MCF 10A (cell line): ENCODE measurements at regions of chr7 and their contacts with region 1.

Region 1: GRCh38 chr7:47266131-47266706 is 315.7 kb downstream of the TNS3 start:
- DNase-seq: peak; percentile 75
- H3K4me3 Mint-ChIP-seq: no peak overlapping the region
- H3K27ac Mint-ChIP-seq: no peak overlapping the region
- H3K4me1 Mint-ChIP-seq: peaks cover 11% of the 10 kb centered on the region
- H3K27me3 Mint-ChIP-seq: no peaks in the 10 kb centered on the region
- CTCF ChIP-seq: peak; percentile 88

Region 2: GRCh38 chr7:47207956-47208355 is 58.3 kb before region 1 on chr7:
- CTCF ChIA-PET with region 1: no interaction called
- POLR2A ChIA-PET with region 1: no interaction called
- intact Hi-C with region 1: no loop called
- DNase-seq: no peak
- H3K4me3 Mint-ChIP-seq: no peak overlapping the region
- H3K27ac Mint-ChIP-seq: no peak overlapping the region
- H3K4me1 Mint-ChIP-seq: no peaks in the 10 kb centered on the region
- H3K27me3 Mint-ChIP-seq: peaks cover 48% of the 10 kb centered on the region
- CTCF ChIP-seq: no peak

Region 3: DNA sequence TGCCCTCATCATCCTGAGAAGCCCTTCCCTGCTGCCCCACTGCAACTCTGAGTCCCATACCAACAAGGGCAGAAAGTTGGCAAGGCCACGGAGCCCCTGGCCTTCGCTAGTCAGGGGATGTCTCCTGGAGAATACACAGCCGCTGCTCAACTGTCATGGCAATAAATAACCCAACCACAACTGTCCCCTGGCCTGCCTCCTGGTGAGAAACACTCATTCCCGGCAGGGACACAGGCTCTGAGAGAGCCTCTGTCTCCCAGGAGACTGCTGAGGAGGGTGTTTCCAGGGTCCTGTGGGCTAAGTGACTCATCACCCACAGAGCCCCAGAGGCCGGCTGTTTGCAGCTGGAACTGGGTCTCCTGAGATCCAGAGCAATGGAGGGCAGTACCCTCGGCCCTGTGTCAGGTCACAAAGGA is 38.4 kb before region 1 on chr7:
- CTCF ChIA-PET with region 1: no interaction called
- POLR2A ChIA-PET with region 1: no interaction called
- intact Hi-C with region 1: no loop called
- DNase-seq: peak; percentile 54
- H3K4me3 Mint-ChIP-seq: no peak overlapping the region
- H3K27ac Mint-ChIP-seq: no peak overlapping the region
- H3K4me1 Mint-ChIP-seq: peaks cover 15% of the 10 kb centered on the region
- H3K27me3 Mint-ChIP-seq: no peaks in the 10 kb centered on the region
- CTCF ChIP-seq: no peak

Region 4: DNA sequence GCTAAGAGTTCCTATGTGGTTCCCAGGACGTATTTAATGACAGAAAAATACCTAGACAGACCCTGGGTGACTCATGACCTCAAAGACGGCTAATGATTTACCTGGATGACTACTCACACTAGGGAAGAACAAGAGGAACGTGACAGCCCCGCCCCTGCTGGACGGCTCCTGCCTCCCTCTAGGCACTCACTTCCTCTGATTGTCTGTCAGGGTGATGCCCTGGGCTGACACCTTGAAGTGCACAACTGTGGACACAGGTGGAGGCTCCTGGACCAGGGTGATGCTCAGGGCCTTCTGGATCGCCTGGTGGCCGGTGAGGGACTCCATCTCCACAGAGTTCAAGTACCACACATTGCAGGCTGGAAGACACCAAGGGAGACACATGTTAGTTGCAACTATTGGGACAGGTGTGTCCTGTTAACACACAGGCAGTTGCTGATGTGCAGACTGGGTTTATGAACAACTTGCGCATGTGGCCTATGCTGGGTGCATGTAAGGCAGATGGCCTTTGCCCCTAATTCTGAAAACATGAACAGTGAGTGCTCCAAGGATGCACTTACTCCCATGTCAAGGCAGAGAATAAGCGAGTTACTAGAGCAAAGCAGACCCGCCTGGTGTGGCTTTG is 17.4 kb after region 1 on chr7:
- CTCF ChIA-PET with region 1: interaction called, 28 read pairs
- POLR2A ChIA-PET with region 1: no interaction called
- intact Hi-C with region 1: no loop called
- DNase-seq: peak; percentile 58
- H3K4me3 Mint-ChIP-seq: no peak overlapping the region
- H3K27ac Mint-ChIP-seq: no peak overlapping the region
- H3K4me1 Mint-ChIP-seq: no peaks in the 10 kb centered on the region
- H3K27me3 Mint-ChIP-seq: no peaks in the 10 kb centered on the region
- CTCF ChIP-seq: no peak

Region 5: DNA sequence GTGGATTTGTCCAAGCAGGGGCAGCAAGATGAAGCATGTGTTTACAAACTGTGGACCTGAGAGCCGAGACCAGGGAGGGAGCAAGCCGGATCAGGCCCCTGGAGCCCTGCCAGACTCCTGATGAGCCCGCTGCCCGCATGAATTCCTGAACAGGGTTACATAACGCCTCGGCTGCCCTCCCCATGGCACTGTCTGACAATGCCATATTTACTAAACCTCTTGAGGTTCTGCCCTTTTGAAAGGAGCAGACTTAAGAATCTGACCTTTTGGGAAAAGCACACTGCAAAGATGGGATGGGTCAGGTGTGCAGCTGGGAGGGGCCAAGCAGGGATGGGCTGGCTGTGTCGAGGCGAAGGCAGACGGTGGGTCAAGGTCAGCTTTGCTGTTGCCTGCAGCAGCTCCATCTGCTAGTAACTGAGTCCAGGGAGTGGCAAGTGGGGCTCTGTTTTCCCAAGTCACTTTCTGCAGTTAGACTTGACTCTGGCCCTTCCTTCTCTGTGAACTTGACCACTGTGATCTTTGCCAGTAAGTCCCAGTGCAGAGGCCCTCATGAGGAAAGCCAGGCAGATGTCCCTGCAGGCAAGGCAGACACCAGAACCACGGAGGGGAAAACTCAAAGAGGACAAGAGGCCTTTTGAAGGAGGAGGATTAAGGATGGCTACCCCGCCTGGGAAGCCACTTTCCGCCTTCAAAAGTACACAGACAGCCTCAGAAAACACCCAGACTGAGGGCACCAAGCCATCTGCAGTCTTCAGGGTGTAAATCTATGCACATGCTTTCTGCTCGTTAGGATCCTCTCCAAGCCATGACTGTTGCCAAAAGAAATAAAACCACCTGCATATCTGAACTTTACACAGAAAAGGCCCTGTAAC is 139.9 kb after region 1 on chr7:
- CTCF ChIA-PET with region 1: interaction called, 6 read pairs
- POLR2A ChIA-PET with region 1: no interaction called
- intact Hi-C with region 1: loop called (anchors 1 kb)
- DNase-seq: peak; percentile 93
- H3K4me3 Mint-ChIP-seq: peak overlapping the region; percentile 54
- H3K27ac Mint-ChIP-seq: peak overlapping the region; percentile 67
- H3K4me1 Mint-ChIP-seq: peaks cover 41% of the 10 kb centered on the region
- H3K27me3 Mint-ChIP-seq: no peaks in the 10 kb centered on the region
- CTCF ChIP-seq: no peak

Region 6: DNA sequence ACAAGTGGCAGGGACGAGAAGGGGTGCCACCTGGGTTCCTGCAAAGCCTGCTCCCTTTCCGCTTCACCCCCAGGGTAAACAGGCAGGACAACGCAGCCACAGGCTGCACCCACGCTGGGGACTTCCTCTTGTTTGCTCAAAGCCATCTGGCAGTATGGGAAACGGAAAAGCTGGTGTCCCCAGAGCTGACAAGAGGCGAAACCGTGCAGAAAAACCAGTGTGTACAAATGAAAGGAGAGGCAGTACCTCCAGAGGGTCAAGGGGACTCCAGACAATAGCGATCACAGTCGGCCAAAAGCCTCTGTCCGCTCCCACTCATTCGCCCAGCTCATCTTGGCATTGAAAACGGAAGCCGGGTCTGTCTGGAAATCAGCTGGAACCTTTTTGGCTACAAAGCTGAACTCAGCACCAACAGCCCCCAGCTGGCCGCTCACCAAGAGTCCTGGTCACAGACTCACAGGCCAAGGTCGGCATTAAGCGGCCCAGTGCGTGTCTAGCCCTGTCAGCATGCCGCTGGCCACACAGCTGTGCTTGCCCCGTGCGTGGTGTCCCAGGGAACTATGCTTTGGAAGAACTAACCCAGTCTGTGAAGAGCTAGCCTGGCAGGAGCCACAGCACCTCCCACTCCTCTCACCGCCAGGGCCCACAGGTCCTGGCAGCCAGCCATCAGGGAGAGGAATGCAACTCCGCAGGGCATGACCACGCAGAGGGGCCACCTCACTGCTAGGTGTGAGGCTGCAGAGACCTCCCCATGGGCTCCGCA is 305.3 kb after region 1 on chr7:
- CTCF ChIA-PET with region 1: interaction called, 11 read pairs
- POLR2A ChIA-PET with region 1: no interaction called
- intact Hi-C with region 1: no loop called
- DNase-seq: peak; percentile 81
- H3K4me3 Mint-ChIP-seq: peak overlapping the region; percentile 55
- H3K27ac Mint-ChIP-seq: peak overlapping the region; percentile 85
- H3K4me1 Mint-ChIP-seq: peaks cover 52% of the 10 kb centered on the region
- H3K27me3 Mint-ChIP-seq: no peaks in the 10 kb centered on the region
- CTCF ChIP-seq: no peak

Region 7: DNA sequence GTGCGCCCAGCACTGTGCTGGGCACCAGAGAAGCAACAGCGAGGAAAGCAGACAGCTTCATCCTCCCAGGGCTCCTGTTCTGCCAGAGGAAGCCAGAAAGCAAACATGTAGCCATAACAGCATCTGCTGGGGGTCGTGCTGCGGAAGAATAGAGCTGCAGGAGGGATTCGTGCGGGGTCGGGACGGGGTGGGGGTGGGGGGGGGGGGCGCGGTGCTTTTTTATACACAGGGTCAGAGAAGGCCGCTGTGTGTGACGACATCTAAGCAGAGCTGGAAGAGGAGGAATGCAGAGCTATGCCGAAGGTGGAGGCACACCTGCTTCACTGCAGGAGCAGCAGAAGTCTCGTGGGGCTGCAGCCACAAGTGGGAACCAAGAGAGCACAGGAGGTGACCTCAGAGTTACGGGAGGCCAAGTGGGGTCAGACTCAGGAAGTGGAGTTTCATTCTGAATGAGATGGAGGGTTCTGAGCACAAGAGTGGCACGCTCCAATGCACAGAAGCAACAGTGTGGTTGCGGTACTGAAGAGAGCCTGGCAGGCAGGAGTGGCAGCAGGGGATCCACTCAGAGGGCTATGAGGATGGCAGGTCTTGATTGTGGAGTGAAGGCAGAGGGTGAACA is 671.0 kb after region 1 on chr7:
- CTCF ChIA-PET with region 1: interaction called, 5 read pairs
- POLR2A ChIA-PET with region 1: no interaction called
- intact Hi-C with region 1: loop called (anchors 2 kb)
- DNase-seq: no peak
- H3K4me3 Mint-ChIP-seq: no peak overlapping the region
- H3K27ac Mint-ChIP-seq: no peak overlapping the region
- H3K4me1 Mint-ChIP-seq: peaks cover 10% of the 10 kb centered on the region
- H3K27me3 Mint-ChIP-seq: no peaks in the 10 kb centered on the region
- CTCF ChIP-seq: no peak

Region 8: GRCh38 chr7:48011323-48011722 is 745.1 kb after region 1 on chr7:
- CTCF ChIA-PET with region 1: no interaction called
- POLR2A ChIA-PET with region 1: no interaction called
- intact Hi-C with region 1: no loop called
- DNase-seq: no peak
- H3K4me3 Mint-ChIP-seq: no peak overlapping the region
- H3K27ac Mint-ChIP-seq: no peak overlapping the region
- H3K4me1 Mint-ChIP-seq: no peaks in the 10 kb centered on the region
- H3K27me3 Mint-ChIP-seq: no peaks in the 10 kb centered on the region
- CTCF ChIP-seq: no peak